ENCODE measurements at regions of chr5 and their contacts with region 1.

Region 1: DNA sequence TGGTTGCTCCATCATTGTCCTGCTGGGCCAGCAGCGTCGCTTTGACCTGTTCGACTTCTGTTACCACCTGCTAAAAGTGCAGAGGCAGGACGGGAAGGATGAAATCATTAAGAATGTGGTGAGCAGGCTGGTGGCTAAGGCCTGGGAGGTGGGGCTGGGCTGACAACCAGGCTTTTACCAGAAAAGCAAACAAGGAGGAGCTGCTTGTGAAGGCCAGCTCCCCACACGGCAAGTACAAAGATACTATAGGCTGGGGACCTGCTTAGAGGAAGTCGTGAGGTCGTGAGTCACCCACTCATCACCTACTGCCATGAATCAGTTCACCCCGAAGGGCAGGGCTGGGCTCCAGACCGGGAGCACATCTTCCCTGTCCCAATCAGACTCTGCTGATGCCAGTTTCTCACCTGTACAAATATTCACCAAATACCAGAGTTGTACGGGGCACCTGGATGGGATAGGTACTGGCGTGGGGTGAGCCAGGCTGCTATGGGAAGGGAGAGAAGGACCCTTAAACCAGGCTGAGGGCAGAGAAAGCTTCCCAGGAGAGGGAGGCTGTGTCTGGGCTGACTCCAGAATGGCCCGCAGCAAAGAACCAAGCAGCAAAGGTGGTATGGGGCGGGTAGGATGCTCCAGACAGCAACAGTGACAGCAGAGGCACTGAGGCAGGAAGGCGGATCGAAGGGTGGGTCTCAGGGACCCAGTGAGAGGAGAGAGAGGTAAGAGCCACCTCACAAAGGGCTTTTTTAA is 69.3 kb upstream of the NIPAL4 start:
- DNase-seq: no peak
- CTCF ChIP-seq: no peak

Region 2: GRCh38 chr5:157354800-157355199 is 35.9 kb before region 1 on chr5:
- CTCF ChIA-PET with region 1: interaction called, 4 read pairs
- POLR2A ChIA-PET with region 1: interaction called, 11 read pairs
- DNase-seq: no peak
- CTCF ChIP-seq: peak; percentile 24

Region 3: GRCh38 chr5:157400741-157401495 is 10.2 kb after region 1 on chr5:
- CTCF ChIA-PET with region 1: interaction called, 10 read pairs
- POLR2A ChIA-PET with region 1: no interaction called
- DNase-seq: no peak
- CTCF ChIP-seq: no peak